SK-N-SH (cell line): ENCODE measurements at regions of chr2 and their contacts with region 1.

Region 1: GRCh38 chr2:166106431-166107015 is 21.3 kb downstream of the SCN1A start:
- DNase-seq: peak; percentile 48
- H3K4me3 ChIP-seq: no peak overlapping the region; a peak in 1 of 4 replicates
- H3K27ac ChIP-seq: no peak overlapping the region
- H3K4me1 ChIP-seq: no peaks in the 10 kb centered on the region; a peak in 1 of 4 replicates
- H3K27me3 ChIP-seq: no peaks in the 10 kb centered on the region
- CTCF ChIP-seq: peak; percentile 48
- EP300 ChIP-seq: no peak
- RAD21 ChIP-seq: peak; percentile 81

Region 2: DNA sequence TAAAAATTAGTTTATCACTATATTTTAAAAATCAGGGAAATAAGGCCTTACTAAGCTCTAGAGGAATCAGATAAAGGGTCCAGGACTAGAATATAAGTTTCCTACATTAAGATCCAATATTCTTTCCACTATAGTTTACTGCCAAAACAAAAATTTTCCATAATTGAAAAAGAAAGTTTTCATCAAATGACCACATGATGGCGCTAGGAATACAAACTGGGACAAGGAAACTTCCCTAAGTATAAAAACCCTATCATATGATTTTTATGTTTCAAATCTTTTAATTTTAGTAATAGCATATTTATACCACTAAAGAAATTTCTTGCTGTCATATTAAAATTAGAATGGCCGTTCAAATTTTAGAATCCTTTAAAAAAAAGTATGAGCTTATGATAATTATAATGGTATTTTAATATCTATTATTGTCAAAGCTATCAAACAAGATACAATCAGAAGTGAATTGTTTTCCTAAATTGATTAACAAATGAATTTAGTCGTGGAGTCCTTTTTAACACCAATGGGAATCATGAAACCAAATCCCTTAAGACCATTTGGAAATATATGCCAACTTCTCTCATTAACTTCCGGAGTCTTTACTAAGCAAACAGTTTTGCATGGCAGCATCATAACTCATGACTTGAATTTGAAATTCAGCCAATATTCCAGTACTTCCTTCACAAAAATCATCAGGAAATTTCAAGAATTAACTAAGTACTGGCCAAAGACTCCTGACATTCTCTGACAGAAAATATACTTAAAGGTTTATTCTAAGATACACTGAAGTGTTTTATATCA is 49.0 kb before region 1 on chr2:
- CTCF ChIA-PET with region 1: interaction called, 36 read pairs
- POLR2A ChIA-PET with region 1: no interaction called
- DNase-seq: no peak
- H3K4me3 ChIP-seq: no peak overlapping the region; a peak in 1 of 4 replicates
- H3K27ac ChIP-seq: peak overlapping the region in 1 of 2 experiments; percentile 30; a peak in 2 of 4 replicates
- H3K4me1 ChIP-seq: peaks cover 0 to 6% of the 10 kb centered on the region in 2 experiments; a peak in 2 of 4 replicates
- H3K27me3 ChIP-seq: no peaks in the 10 kb centered on the region
- CTCF ChIP-seq: peak; percentile 81
- EP300 ChIP-seq: no peak
- RAD21 ChIP-seq: peak; percentile 69

Region 3: DNA sequence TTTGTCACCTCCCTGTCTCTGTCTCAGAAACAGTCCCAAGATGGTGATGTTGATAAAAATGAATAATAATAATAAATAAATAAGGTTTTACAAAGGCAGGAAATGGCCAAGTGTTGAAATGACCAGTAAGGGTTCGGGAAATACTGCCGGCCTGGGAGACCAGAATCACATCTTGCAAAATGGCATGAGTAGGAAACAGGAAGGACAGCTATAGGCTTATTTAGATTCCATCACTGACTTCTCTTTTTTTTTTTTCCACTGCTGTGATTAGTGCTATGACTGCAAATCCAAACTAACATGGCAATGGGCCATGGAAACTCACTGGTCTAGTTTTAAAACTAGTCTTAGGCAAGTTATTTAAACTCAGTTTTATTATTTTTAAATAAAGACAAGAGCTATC is 39.3 kb before region 1 on chr2:
- CTCF ChIA-PET with region 1: interaction called, 36 read pairs
- POLR2A ChIA-PET with region 1: no interaction called
- DNase-seq: no peak
- H3K4me3 ChIP-seq: no peak overlapping the region
- H3K27ac ChIP-seq: no peak overlapping the region
- H3K4me1 ChIP-seq: peaks cover 0 to 6% of the 10 kb centered on the region in 2 experiments; a peak in 2 of 4 replicates
- H3K27me3 ChIP-seq: no peaks in the 10 kb centered on the region
- CTCF ChIP-seq: no peak
- EP300 ChIP-seq: no peak
- RAD21 ChIP-seq: no peak